ENCODE measurements at regions of chr14 and their contacts with region 1.

Region 1: DNA sequence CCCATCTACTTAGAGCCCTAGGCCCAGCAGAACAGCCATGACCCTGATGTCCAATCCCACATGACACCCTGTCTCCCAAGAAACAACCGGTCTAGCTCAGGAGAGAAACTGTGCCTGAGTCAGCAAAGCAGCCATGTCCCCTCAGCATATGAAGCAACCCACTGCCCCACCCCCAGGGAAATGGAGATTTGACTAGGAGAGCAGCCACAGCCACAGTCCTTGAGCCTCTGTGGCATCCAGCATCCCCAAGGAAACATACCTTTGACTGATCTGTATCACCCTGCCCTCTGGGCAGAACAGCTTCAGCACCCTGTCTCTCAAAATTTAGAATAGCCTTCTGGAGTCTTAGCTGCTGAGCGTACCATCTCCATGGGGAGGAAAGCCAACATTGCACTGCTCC is 642.0 kb upstream of the FBXO33 start:
- DNase-seq: no peak
- H3K4me3 ChIP-seq: no peak overlapping the region
- H3K27ac ChIP-seq: no peak overlapping the region
- H3K4me1 ChIP-seq: no peaks in the 10 kb centered on the region
- H3K27me3 ChIP-seq: no peaks in the 10 kb centered on the region
- CTCF ChIP-seq: no peak
- EP300 ChIP-seq: no peak
- POLR2A ChIP-seq: no peak

Region 2: DNA sequence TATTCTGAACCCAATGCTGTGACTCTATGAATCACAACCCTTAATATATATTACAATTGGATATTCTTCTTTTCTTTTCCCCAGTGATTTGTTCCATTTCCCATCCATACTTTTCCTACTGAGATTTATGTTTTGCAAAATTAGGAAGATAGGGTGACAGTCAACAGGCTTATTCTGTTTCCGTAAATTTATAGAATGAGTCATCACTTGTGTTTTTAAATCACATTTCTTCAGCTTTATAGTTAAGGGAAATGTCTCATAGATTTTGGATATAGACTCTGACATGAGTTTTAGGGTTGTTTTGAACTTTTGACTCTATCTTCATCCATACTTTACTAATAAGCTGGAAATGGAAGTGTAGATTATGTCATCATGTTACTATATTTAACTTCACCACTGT is 19.6 kb after region 1 on chr14:
- in situ Hi-C with region 1: no loop called
- intact Hi-C with region 1: loop called (anchors 1 kb)
- DNase-seq: no peak
- H3K4me3 ChIP-seq: no peak overlapping the region
- H3K27ac ChIP-seq: no peak overlapping the region
- H3K4me1 ChIP-seq: no peaks in the 10 kb centered on the region
- H3K27me3 ChIP-seq: no peaks in the 10 kb centered on the region
- CTCF ChIP-seq: no peak
- EP300 ChIP-seq: no peak
- POLR2A ChIP-seq: no peak